PC-3 (cell line): ENCODE measurements at regions of chr4 and their contacts with region 1.

Region 1: GRCh38 chr4:156983366-156983765 is 11.8 kb upstream of the PDGFC start:
- DNase-seq: peak; percentile 41
- ATAC-seq: peak; percentile 51; the same call in 1 of the 2 replicates
- H3K4me3 ChIP-seq: no peak overlapping the region
- H3K27ac ChIP-seq: no peak overlapping the region
- H3K4me1 ChIP-seq: no peaks in the 10 kb centered on the region
- H3K27me3 ChIP-seq: no peaks in the 10 kb centered on the region
- CTCF ChIP-seq: peak; percentile 56

Region 2: GRCh38 chr4:157045507-157046127 is 62.3 kb after region 1 on chr4:
- CTCF ChIA-PET with region 1: no interaction called
- POLR2A ChIA-PET with region 1: no interaction called
- intact Hi-C with region 1: loop called (anchors 1 kb)
- DNase-seq: peak; percentile 67
- ATAC-seq: peak; percentile 85
- H3K4me3 ChIP-seq: no peak overlapping the region
- H3K27ac ChIP-seq: no peak overlapping the region
- H3K4me1 ChIP-seq: no peaks in the 10 kb centered on the region
- H3K27me3 ChIP-seq: no peaks in the 10 kb centered on the region
- CTCF ChIP-seq: peak; percentile 82

Region 3: GRCh38 chr4:157057218-157057617 is 73.9 kb after region 1 on chr4:
- CTCF ChIA-PET with region 1: no interaction called
- POLR2A ChIA-PET with region 1: no interaction called
- intact Hi-C with region 1: no loop called
- DNase-seq: no peak
- ATAC-seq: no peak
- H3K4me3 ChIP-seq: no peak overlapping the region
- H3K27ac ChIP-seq: no peak overlapping the region
- H3K4me1 ChIP-seq: no peaks in the 10 kb centered on the region
- H3K27me3 ChIP-seq: no peaks in the 10 kb centered on the region
- CTCF ChIP-seq: no peak

Region 4: DNA sequence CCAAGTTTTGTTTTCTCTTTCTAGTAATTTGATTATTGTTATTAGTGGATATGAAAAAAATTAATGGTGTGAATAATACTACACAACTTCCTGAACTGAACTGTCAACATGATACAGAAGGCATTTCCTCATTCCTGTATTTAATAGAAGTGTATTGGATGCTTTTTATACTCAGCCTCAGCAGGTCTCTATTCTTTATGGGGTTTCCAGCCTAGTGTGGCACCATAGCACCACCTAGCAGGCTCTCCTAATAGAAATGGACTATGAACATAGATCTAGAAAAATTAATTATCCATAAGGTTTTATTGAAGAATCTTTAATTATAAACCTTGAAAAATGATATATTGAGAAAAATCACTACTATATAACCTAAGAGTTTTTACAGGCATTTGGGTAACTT is 145.0 kb after region 1 on chr4:
- CTCF ChIA-PET with region 1: no interaction called
- POLR2A ChIA-PET with region 1: no interaction called
- intact Hi-C with region 1: loop called (anchors 5 kb)
- DNase-seq: peak; percentile 50
- ATAC-seq: peak; percentile 70
- H3K4me3 ChIP-seq: no peak overlapping the region
- H3K27ac ChIP-seq: no peak overlapping the region
- H3K4me1 ChIP-seq: no peaks in the 10 kb centered on the region
- H3K27me3 ChIP-seq: no peaks in the 10 kb centered on the region
- CTCF ChIP-seq: peak; percentile 67

Region 5: GRCh38 chr4:157172011-157172410 is 188.6 kb after region 1 on chr4:
- CTCF ChIA-PET with region 1: interaction called, 3 read pairs
- POLR2A ChIA-PET with region 1: no interaction called
- intact Hi-C with region 1: loop called (anchors 2 kb)
- DNase-seq: peak; percentile 46
- ATAC-seq: no peak; the same call in 1 of the 2 replicates
- H3K4me3 ChIP-seq: no peak overlapping the region
- H3K27ac ChIP-seq: no peak overlapping the region
- H3K4me1 ChIP-seq: no peaks in the 10 kb centered on the region
- H3K27me3 ChIP-seq: no peaks in the 10 kb centered on the region
- CTCF ChIP-seq: peak; percentile 48

Region 6: GRCh38 chr4:157185363-157185762 is 202.0 kb after region 1 on chr4:
- CTCF ChIA-PET with region 1: no interaction called
- POLR2A ChIA-PET with region 1: no interaction called
- intact Hi-C with region 1: no loop called
- DNase-seq: no peak
- ATAC-seq: no peak
- H3K4me3 ChIP-seq: no peak overlapping the region
- H3K27ac ChIP-seq: no peak overlapping the region
- H3K4me1 ChIP-seq: no peaks in the 10 kb centered on the region
- H3K27me3 ChIP-seq: no peaks in the 10 kb centered on the region; the same call in 1 of the 2 replicates
- CTCF ChIP-seq: no peak